Left colon (tissue), 2 donors: ENCODE measurements at regions of chr11 and their contacts with region 1.

Region 1: DNA sequence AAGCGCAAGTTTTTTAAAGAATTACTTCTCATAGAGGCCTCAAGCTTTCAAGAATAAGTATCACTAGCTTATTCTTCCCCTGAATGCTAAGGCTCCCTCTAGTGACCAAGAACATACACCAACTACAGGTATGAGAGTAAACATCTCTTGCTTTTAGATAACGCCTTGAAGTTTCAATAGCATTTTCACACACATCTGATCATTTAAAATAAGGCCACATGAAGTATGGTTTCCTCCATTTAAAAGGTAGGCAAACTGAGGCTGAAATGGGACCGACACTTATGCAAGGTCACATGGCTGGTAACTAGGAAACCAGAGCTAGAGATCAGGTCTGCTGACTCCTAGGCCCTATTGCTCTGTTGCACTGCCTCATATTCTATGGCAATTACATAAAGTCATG is 66.5 kb downstream of the CCDC34 start:
- DNase-seq: no peak
- ATAC-seq: peak; percentile 31

Region 2: DNA sequence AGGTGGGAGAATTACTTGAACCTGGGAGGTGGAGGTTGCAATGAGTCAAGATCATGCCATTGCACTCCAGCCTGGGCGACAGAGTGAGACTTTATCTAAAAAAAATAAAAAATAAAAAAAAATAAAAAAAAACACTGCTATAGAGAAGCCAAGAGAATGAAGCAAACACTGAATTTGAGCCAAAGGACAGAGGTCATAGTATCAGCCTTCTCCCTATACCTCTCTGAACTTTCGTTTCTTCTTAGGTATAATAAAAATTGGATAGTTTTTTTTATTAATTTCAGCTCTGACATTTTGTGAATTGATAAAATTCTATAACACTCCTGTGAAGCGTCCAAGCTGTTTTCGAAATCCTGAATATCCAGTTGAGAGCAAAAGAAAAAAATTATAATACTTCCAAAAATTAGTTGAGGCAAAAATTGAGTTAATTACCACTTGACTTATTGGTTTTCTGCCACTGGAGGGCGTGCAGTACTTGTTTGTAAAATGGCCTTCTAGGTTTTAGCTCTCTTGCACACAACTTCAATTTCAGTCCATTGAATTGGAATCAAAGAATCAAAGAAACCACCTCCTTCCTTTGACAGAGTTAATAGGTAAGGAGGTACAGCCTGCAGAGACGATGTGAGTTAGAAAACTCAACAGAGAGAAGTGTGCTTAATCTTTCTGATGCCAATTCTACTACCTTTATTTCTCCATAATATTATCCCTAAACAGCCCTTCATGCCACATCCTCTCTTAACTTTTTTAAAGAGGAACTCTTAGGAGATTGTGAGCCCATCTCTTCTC is 112.6 kb before region 1 on chr11:
- intact Hi-C with region 1: loop called in 1 of 2 experiments (anchors 2 kb)
- DNase-seq: peak in 1 of 2 donors; percentile 69
- ATAC-seq: peak; percentile 33

Region 3: DNA sequence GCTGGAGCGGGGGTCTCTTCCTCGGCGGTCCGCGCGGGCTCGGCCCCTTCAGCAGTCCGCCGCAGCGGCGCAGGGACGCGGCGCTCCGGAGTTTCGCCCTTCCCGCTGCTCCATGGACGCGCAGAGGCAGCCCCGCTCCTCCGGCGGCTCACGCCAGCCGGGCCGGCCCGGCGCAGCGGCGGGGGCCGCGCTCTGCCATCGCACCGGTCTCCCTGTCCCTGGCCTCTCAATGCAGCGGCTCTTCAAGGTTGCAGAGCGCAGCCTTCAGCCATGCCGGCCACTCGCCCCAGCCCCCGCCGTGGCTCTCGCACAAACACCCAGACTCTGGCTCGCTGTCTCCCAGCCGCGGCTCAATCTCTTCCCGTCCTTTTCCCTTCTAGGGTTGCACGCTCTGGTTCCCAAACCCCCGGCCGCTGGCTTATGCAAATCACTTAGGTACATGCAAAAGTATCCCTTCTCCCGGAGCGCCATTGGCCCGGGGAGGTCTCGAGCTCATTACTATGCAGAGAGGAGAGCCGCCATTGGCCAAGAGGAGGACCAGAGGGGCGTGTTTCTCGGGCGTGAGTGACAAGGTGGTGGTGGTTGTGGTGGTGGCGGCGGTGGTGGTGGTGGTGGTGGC is 176.0 kb after region 1 on chr11 and contains the start of gene LGR4:
- intact Hi-C with region 1: no loop called
- DNase-seq: peak; percentile 94 to 98
- ATAC-seq: peak; percentile 82
- total RNA-seq, gene LGR4: 120 to 125 TPM

Region 4: GRCh38 chr11:27592098-27592780 is 295.7 kb after region 1 on chr11:
- intact Hi-C with region 1: no loop called
- DNase-seq: no peak
- ATAC-seq: no peak